ENCODE measurements at regions of chr11 and their contacts with region 1.

Region 1: DNA sequence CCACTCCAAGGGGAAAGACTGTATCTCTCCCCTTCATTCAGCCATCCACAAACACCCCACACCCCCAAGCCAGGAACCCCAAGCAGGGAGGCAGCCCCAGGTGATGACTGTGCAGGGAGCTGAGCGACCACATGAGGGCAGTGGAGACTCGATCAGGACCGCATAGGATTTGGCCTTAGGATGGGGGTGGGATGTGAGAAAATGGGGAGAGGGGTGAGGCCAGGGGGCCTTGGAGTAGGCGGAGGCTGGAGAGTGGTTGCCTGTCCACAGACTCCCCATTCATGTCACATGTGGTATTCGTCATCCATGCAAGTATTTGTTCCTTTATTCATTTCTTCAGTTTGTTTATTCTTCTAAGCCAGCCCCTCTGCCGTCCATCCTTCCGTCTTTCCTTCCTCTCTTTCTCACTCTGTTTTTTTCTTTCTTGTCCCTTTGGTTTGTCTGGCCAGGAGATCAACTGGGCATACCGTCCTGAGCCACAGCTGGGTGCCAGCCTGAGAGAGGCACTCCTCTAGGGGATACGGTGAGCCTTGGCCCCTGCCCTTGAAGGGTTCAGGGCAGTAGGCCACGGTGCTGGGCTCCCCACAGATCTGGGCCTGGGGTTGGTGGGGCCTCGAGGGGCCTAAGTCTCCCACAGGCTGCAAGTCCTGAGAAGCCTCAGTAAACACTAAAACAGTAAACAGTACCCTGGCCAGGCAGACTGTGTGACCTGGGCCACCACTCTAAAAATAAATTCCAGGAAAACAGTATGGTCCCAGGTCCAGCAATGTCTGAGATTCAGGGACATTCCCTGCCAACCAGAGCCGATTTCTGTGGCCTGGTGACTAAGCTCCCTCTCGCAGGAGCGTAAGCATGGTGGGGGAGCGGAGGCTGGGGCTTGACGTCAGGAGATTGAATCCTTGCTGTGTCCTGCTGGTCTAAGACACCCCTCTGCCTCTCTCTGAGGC is 2.5 kb upstream of the RHOD start:
- DNase-seq: peak; percentile 23 to 85
- H3K4me3 ChIP-seq: no peak overlapping the region
- H3K27ac ChIP-seq: no peak overlapping the region
- H3K4me1 ChIP-seq: peaks cover 4 to 25% (median 15%) of the 10 kb centered on the region in 4 experiments
- H3K27me3 ChIP-seq: peaks cover 0 to 13% (median 6%) of the 10 kb centered on the region in 4 experiments; a peak in 5 of 7 replicates
- CTCF ChIP-seq: peak; percentile 87 to 96 (median 94)
- EP300 ChIP-seq: no peak
- POLR2A ChIP-seq: no peak
- RAD21 ChIP-seq: peak; percentile 89 to 90

Region 2: DNA sequence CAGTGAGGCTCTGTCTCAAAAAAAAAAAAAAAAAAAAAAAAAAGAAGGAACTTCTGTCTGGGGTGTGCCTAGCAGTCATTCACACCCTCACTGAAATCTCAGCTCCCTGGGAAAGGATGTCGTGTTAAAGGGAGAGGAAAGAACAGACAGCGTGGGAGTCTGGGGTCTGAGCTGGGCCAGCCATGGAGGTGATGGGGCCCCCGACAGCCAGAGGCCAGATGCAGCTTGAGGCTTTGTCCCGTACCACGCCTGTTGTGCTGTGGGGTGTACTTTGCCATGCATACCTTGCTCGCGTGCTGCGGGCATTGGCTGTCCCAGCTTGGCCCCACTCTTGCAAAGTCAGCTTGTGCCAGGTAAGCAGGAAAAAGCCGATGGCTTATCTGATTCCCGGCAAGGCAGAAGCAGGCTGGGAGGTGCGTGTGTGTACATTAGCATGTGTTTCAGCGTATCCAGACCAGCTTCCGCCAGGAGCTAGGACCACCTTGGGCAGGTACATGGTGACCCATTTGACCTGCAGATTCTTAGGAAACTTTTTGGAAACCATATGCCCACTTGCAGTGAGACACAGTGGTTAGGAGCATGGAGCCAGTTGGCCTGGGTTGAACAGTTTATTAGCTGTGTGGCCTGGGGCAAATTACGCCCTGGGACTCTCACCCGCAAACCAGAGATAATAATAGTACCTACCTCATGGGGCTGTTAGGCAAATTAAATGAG is 26.5 kb before region 1 on chr11:
- CTCF ChIA-PET with region 1: interaction called, 15 read pairs
- POLR2A ChIA-PET with region 1: interaction called, 3 read pairs
- DNase-seq: no peak
- H3K4me3 ChIP-seq: no peak overlapping the region
- H3K27ac ChIP-seq: no peak overlapping the region
- H3K4me1 ChIP-seq: peaks cover 2 to 16% (median 6%) of the 10 kb centered on the region in 4 experiments
- H3K27me3 ChIP-seq: peaks cover 18 to 29% (median 22%) of the 10 kb centered on the region in 4 experiments
- CTCF ChIP-seq: no peak
- EP300 ChIP-seq: no peak
- POLR2A ChIP-seq: no peak
- RAD21 ChIP-seq: no peak

Region 3: GRCh38 chr11:67071420-67072284 is 17.5 kb after region 1 on chr11:
- CTCF ChIA-PET with region 1: no interaction called
- POLR2A ChIA-PET with region 1: interaction called, 16 read pairs
- DNase-seq: peak; percentile 83 to 96
- H3K4me3 ChIP-seq: peak overlapping the region; percentile 9 to 56 (median 44); a peak in 7 of 8 replicates
- H3K27ac ChIP-seq: no peak overlapping the region
- H3K4me1 ChIP-seq: peaks cover 0 to 1% (median 0%) of the 10 kb centered on the region in 4 experiments; a peak in 2 of 7 replicates
- H3K27me3 ChIP-seq: no peaks in the 10 kb centered on the region
- CTCF ChIP-seq: peak; percentile 90 to 97 (median 94)
- EP300 ChIP-seq: no peak
- POLR2A ChIP-seq: no peak
- RAD21 ChIP-seq: peak; percentile 69 to 73

Region 4: DNA sequence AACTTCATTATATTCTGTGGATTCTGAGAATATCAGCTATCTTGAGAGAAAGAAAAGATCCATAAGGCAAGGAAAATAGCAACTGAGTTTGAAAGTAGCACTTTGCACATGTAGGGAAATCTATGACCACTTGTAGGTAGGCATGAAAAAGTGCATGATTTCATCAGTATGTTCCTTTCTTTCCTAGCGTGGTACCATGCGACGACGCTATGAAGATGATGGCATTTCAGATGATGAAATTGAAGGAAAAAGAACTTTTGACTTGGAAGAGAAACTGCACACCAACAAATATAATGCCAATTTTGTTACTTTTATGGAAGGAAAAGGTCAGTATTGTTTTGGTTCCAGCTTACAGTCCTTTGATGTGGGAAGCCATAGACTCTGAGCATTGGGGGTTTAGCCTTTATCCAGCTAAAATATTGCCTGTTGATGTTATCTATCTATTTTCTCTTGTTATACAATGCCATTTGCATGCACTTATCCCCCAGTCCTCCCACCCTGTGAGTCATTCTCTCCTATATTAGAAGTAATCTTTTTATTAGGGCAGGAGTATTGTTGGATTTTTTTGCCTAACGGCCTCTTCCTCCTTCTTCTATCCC is 125.8 kb after region 1 on chr11:
- CTCF ChIA-PET with region 1: no interaction called
- POLR2A ChIA-PET with region 1: no interaction called
- DNase-seq: no peak
- H3K4me3 ChIP-seq: no peak overlapping the region
- H3K27ac ChIP-seq: no peak overlapping the region
- H3K4me1 ChIP-seq: no peaks in the 10 kb centered on the region
- H3K27me3 ChIP-seq: no peaks in the 10 kb centered on the region
- CTCF ChIP-seq: no peak
- EP300 ChIP-seq: no peak
- POLR2A ChIP-seq: no peak
- RAD21 ChIP-seq: no peak

Measured in H1 (cell line).